Common myeloid progenitor, CD34-positive (primary cell): ENCODE measurements at regions of chr2 and their contacts with region 1.

Region 1: GRCh38 chr2:26605195-26605998 is 35.8 kb downstream of the CIB4 start:
- DNase-seq: peak; percentile 40 to 63 (median 52)
- H3K4me3 ChIP-seq: no peak overlapping the region
- H3K27ac ChIP-seq: no peak overlapping the region
- H3K4me1 ChIP-seq: peaks cover 0 to 2% (median 0%) of the 10 kb centered on the region in 4 experiments
- H3K27me3 ChIP-seq: peaks cover 0 to 23% (median 2%) of the 10 kb centered on the region in 5 experiments

Region 2: DNA sequence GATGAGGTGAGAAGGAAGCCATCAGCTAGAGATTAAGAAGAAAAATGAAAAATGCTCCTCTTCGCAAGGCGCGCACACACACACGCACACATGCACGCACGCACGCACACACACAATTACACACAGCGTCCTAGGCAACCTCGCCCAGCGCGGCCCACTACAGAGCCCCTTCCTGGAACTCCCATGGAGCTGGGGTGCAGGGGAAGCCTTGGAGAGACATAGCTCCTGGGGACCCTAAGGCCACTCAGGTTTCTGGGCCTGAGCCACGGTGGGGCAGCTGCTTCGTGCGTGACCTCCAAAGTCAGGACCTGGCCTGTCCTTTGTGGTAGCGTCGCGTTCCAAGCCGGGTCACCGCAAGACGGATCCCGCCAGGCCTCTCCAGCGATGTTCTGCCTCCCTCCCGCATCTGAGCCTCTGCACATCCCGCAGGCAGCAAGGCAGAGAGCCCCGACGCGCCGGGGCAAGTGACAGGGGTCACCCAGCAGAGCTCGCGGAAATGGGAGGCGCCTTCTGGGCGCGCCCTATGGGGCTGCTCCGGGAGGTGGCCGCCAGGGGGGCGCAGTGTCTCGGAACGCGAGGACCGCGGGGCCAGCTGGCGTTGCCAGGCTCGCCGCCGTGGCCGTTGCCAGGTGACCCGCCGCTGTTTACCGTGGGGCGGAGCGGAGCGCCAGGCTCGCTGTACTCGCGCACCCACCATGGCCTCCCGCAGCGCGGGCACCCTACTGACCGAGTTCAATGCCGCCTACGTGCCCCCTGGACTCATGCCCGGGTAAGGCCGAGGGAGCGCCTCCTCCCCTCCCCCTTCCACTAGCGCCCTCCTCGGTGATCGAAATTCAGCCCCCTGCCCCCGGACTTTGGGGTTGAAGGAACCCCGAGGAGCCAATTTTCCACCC is 43.2 kb before region 1 on chr2:
- CTCF ChIA-PET with region 1: no interaction called
- POLR2A ChIA-PET with region 1: no interaction called
- DNase-seq: peak; percentile 73 to 88 (median 83)
- H3K4me3 ChIP-seq: peak overlapping the region; percentile 3 to 77 (median 65)
- H3K27ac ChIP-seq: no peak overlapping the region
- H3K4me1 ChIP-seq: peaks cover 0 to 20% (median 15%) of the 10 kb centered on the region in 4 experiments
- H3K27me3 ChIP-seq: peaks cover 5 to 83% (median 40%) of the 10 kb centered on the region in 5 experiments

Region 3: DNA sequence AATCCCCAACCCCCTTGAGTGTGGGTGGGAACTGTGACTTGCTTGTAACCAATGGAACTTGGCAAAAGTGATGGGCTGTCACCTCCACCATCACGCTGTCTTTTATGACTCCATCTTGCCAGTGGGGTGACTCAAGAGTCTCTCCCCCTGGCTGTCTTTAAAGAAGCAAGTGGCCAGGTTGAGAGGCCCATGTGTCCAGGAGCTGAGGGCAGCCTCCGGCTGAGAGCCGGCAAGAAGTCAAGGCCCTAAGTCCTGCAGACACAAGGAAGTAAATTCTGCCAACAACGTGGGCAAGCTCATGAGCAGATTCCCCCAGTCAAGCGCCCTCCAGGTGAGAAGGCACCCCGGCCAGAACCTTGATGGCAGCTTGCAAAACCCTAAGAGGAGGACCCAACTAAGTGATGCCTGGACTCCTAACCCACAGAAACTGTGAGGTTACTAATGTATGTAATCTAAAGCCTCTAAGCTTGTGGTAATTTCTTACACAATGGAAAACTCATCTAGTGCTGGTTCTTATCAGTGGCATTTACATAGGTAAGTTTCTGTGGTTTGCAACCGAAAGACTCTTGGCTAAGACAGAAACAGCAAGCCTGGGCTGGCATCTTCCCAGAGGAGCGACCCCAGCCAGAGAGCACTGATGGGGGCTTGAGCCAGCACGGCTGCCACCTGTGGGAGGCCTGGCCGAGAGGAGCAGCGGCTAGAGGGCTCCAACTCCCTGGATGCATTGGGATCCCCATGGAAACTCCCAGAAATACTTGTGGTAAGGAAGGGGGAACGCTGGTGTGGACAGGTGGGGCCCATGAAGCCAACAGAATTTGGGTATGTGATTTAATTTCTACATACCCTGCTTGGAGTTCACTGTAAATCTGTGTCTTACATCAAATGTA is 13.5 kb before region 1 on chr2:
- CTCF ChIA-PET with region 1: interaction called, 20 read pairs
- POLR2A ChIA-PET with region 1: no interaction called
- DNase-seq: no peak
- H3K4me3 ChIP-seq: no peak overlapping the region
- H3K27ac ChIP-seq: no peak overlapping the region
- H3K4me1 ChIP-seq: peaks cover 0 to 3% (median 1%) of the 10 kb centered on the region in 4 experiments
- H3K27me3 ChIP-seq: peaks cover 0 to 19% (median 3%) of the 10 kb centered on the region in 5 experiments

Region 4: DNA sequence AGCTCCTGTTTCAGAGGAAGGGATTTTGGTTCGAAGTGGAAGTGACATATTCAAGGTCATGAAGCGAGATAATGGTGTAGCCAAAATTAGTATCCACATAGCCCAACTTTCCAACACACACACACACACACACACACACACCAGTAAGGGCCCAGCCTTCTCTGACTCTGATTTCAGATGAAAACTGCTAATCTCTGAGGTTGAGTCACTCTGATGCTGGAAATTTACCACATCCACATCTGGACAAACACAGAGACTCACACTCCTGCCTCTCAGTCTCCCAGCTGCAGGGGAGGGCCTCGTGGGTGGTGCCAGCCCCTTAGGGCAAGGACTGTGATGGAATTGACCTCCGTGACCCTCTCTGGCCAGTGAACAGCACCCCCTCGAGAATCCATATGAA is 129.7 kb after region 1 on chr2:
- CTCF ChIA-PET with region 1: interaction called, 11 read pairs
- POLR2A ChIA-PET with region 1: no interaction called
- DNase-seq: peak in 2 of 3 donors; percentile 34 to 45
- H3K4me3 ChIP-seq: no peak overlapping the region
- H3K27ac ChIP-seq: no peak overlapping the region
- H3K4me1 ChIP-seq: peaks cover 0 to 3% (median 2%) of the 10 kb centered on the region in 4 experiments
- H3K27me3 ChIP-seq: peaks cover 0 to 52% (median 18%) of the 10 kb centered on the region in 5 experiments

Region 5: DNA sequence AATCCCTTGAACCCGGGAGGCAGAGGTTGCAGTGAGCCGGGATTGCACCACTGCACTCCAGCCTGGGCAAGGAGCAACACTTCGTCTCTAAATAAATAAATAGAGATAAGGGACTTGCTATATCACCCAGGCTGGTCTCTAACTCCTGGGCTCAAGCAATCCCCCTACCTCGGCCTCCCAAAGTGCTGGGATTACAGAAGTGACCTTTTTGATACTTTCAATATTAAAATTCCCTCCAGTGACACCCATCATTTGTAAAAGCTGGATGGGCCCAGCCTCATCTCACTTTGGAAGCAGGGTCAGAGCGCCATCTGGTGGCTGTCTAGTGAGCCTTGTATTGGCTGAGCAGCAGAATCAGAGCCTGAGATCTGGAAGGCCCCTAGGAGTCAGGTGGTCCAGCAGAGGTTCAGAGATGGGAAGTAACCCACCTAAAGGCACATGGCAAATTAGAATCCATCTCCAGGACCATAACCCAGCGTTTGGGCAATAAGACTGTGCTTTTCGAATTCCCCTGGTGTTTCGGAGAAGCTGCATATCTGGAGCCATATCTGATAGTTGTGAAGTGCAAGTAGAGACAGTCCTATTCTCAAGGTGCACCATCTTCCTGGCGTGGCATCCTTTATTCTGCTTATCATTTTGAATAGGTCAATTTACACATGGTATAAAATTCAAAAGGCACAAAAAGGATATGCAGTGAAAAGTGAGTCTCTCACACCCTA is 140.4 kb after region 1 on chr2:
- CTCF ChIA-PET with region 1: interaction called, 82 read pairs
- POLR2A ChIA-PET with region 1: no interaction called
- DNase-seq: peak; percentile 83 to 91 (median 87)
- H3K4me3 ChIP-seq: no peak overlapping the region
- H3K27ac ChIP-seq: no peak overlapping the region
- H3K4me1 ChIP-seq: peaks cover 0 to 22% (median 20%) of the 10 kb centered on the region in 4 experiments
- H3K27me3 ChIP-seq: peaks cover 0 to 8% (median 4%) of the 10 kb centered on the region in 5 experiments